Activated T-helper 1 cell treated with anti-CD3 and anti-CD28 coated beads, Interleukin-12 subunit alpha, Interleukin-12 subunit beta, Interleukin-2, Interleukin-4 antibody, amounts not matched to agents 30 ng/mL and 10 ng/mL and 1 ng/mL, durations not matched to agents 14 hours and 24 hours and 36 hours (primary cell): ENCODE measurements at regions of chr5 and their contacts with region 1.

Region 1: GRCh38 chr5:154811653-154812365 is 38.6 kb downstream of the FAXDC2 start:
- DNase-seq: peak; percentile 37
- H3K4me3 Mint-ChIP-seq: no peak overlapping the region
- H3K27ac Mint-ChIP-seq: no peak overlapping the region
- H3K4me1 Mint-ChIP-seq: peaks cover 42% of the 10 kb centered on the region
- H3K27me3 Mint-ChIP-seq: no peaks in the 10 kb centered on the region

Region 2: DNA sequence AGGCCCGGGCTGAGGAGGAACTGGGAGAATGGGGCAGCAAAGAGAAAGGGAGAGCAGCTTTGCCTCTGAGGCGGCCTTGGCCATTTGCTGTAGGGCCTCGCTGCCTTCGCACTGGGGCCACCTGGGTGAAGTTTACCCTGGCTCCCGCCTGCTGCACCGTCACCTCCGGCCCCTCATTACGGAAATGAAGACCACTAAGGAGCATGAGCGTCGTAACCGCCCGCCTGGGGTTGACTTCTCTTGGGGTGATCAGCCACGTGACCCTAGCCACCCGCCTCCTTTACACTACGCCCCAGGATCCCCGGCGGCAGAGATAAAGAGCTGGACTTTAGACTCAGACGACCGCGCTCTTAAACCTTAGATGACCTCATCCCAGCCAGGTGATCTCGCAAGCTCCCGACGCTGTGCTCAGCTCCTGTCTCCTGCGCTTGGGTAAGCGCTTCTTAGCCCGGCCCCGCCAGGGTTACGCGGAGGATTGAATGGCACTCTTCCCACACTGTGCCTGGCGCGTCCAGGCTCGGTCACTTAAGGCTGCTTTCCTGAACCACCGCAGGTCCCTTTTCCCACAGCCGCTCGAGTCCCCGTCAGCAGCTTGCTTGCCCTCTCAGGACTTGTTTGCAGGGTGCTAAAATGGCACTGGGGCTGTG is 164.6 kb before region 1 on chr5:
- intact Hi-C with region 1: loop called (anchors 1 kb)
- DNase-seq: no peak
- H3K4me3 Mint-ChIP-seq: peak overlapping the region; percentile 72
- H3K27ac Mint-ChIP-seq: no peak overlapping the region
- H3K4me1 Mint-ChIP-seq: peaks cover 16% of the 10 kb centered on the region
- H3K27me3 Mint-ChIP-seq: peaks cover 23% of the 10 kb centered on the region

Region 3: GRCh38 chr5:154683101-154683880 is 128.5 kb before region 1 on chr5:
- intact Hi-C with region 1: loop called (anchors 1 kb)
- DNase-seq: no peak
- H3K4me3 Mint-ChIP-seq: peak overlapping the region; percentile 29
- H3K27ac Mint-ChIP-seq: no peak overlapping the region
- H3K4me1 Mint-ChIP-seq: peaks cover 6% of the 10 kb centered on the region
- H3K27me3 Mint-ChIP-seq: peaks cover 30% of the 10 kb centered on the region

Region 4: GRCh38 chr5:154793599-154794524 is 17.9 kb before region 1 on chr5:
- intact Hi-C with region 1: loop called (anchors 2 kb)
- DNase-seq: no peak
- H3K4me3 Mint-ChIP-seq: no peak overlapping the region
- H3K27ac Mint-ChIP-seq: no peak overlapping the region
- H3K4me1 Mint-ChIP-seq: peaks cover 12% of the 10 kb centered on the region
- H3K27me3 Mint-ChIP-seq: no peaks in the 10 kb centered on the region